Activated naive CD4-positive, alpha-beta T cell treated with anti-CD3 and anti-CD28 coated beads, Interleukin-2, amount 10 ng/mL, durations not matched to agents 7 days and 5 days (primary cell): ENCODE measurements at regions of chr18 and their contacts with region 1.

Region 1: GRCh38 chr18:45664824-45665763 is 49.8 kb downstream of the SLC14A2 start:
- DNase-seq: peak; percentile 76
- H3K4me3 Mint-ChIP-seq: no peak overlapping the region
- H3K27ac Mint-ChIP-seq: peak overlapping the region; percentile 84
- H3K4me1 Mint-ChIP-seq: peaks cover 52% of the 10 kb centered on the region
- H3K27me3 Mint-ChIP-seq: peaks cover 34% of the 10 kb centered on the region

Region 2: GRCh38 chr18:45402485-45403056 is 262.5 kb before region 1 on chr18:
- CTCF ChIA-PET with region 1: no interaction called
- DNase-seq: no peak
- H3K4me3 Mint-ChIP-seq: no peak overlapping the region
- H3K27ac Mint-ChIP-seq: no peak overlapping the region
- H3K4me1 Mint-ChIP-seq: no peaks in the 10 kb centered on the region
- H3K27me3 Mint-ChIP-seq: no peaks in the 10 kb centered on the region

Region 3: GRCh38 chr18:45652303-45653080 is 12.6 kb before region 1 on chr18:
- CTCF ChIA-PET with region 1: interaction called, 17 read pairs
- DNase-seq: no peak
- H3K4me3 Mint-ChIP-seq: no peak overlapping the region
- H3K27ac Mint-ChIP-seq: no peak overlapping the region
- H3K4me1 Mint-ChIP-seq: peaks cover 8% of the 10 kb centered on the region
- H3K27me3 Mint-ChIP-seq: peaks cover 59% of the 10 kb centered on the region

Region 4: GRCh38 chr18:45722899-45723298 is 57.8 kb after region 1 on chr18:
- CTCF ChIA-PET with region 1: interaction called, 26 read pairs
- DNase-seq: peak; percentile 81
- H3K4me3 Mint-ChIP-seq: no peak overlapping the region
- H3K27ac Mint-ChIP-seq: no peak overlapping the region
- H3K4me1 Mint-ChIP-seq: peaks cover 5% of the 10 kb centered on the region
- H3K27me3 Mint-ChIP-seq: peaks cover 19% of the 10 kb centered on the region

Region 5: DNA sequence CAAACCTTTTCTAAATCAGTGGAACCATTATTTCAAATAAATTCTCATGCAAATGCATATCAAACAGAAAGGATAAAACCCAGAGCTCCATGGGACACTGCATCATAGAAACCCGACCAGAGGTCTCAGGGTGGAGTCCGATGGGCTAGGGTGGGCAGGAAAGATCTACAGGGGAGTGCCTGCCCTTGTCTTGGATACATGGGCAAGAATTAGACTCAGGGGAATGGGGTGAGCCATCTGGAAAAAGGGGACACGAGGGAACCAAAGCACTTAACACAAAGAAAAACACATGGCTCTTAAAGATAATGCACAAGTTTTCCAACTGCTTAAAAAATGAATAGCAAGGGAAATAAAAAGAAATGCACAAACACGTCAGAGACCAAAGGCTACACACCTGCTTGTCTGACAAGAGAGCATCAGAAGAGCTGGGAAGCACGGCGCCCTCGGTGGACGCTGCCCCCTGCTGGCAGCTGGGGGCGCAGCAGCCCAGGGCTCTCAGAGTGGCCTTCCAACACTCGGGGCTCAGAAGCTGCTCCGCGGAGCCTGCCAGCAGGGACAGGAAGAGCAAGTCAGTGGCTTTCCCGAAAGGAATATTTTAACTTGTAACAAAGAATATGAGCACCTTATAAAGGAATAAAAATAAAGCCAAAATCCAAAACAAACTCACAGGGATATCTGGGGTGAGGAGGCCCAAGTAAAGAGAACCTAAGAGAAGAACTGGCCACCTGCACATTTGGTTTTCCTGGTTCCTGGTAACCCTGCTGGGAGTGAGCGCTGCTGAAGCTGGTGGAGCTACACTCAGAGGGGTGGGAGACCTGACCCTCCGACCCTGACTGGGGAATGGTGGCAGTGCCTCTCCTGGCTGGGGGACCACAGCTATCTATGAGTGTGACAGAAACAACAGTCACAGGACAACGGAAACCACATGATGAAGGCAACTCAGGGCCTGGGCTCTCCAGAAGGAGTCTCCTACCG is 214.9 kb after region 1 on chr18:
- CTCF ChIA-PET with region 1: interaction called, 97 read pairs
- DNase-seq: peak; percentile 74
- H3K4me3 Mint-ChIP-seq: no peak overlapping the region
- H3K27ac Mint-ChIP-seq: no peak overlapping the region
- H3K4me1 Mint-ChIP-seq: peaks cover 12% of the 10 kb centered on the region
- H3K27me3 Mint-ChIP-seq: no peaks in the 10 kb centered on the region

Region 6: DNA sequence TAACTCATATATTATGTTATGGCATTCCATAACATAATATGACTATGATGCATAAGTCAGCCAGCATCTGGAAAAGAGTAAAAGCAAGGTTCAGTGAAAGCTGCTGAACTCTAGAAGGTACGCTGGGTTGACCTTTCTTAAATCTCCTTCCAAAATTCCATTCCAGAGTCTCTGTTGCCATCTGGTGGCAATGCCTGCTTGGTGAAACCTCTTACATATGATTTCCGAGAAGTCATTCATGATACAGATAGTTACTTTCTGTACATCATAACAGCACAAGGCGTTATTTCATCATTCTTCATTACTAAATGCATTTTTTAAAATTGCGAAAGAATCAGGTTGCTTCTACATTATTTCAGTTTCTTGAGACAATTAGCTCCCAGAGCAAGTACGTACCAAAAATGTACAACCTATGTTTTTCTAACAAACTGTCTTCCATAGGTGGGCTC is 309.0 kb after region 1 on chr18:
- CTCF ChIA-PET with region 1: interaction called, 13 read pairs
- DNase-seq: peak; percentile 82
- H3K4me3 Mint-ChIP-seq: no peak overlapping the region
- H3K27ac Mint-ChIP-seq: peak overlapping the region; percentile 82
- H3K4me1 Mint-ChIP-seq: peaks cover 8% of the 10 kb centered on the region
- H3K27me3 Mint-ChIP-seq: no peaks in the 10 kb centered on the region

Region 7: DNA sequence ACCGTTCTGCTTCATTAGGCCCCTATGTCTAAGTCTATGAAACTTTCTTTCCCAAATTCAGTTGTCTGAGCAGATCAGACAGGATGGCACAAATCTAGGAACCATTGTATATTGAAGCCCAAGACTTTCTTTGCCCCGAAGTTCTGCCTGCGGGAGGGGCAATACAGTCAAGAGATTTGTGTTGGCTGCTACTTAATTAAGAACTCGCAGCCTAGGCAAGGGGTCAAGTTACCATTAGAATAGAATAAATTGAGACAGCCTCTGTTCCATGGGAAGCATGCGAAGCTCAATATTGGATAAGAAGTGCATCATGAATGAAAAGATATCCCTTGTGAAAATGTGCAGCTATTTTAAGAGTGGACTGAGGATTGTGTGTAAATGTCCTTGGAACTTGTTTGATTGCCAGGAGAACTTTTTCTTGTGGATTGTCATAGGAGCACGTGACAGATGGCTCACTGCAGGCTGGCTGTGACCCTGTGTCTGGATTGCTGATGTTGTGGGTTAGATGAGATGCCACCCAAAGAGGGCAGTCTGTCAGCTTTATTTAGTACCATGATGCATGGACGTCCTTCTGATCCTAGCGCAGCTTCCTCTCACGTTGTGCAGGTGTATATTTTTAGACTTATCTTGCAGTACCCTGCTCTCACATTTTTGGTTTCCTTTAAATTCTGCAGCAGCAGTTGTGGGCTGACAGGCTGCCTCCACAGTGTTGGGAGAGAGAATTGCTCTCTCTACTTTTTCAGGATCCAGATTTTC is 470.0 kb after region 1 on chr18:
- CTCF ChIA-PET with region 1: no interaction called
- DNase-seq: no peak
- H3K4me3 Mint-ChIP-seq: no peak overlapping the region
- H3K27ac Mint-ChIP-seq: peak overlapping the region; percentile 67
- H3K4me1 Mint-ChIP-seq: peaks cover 10% of the 10 kb centered on the region
- H3K27me3 Mint-ChIP-seq: no peaks in the 10 kb centered on the region